A673 (cell line): ENCODE measurements at regions of chr1 and their contacts with region 1.

Region 1: GRCh38 chr1:9494929-9495758 is 44.1 kb upstream of the SLC25A33 start:
- DNase-seq: peak; percentile 75
- H3K4me3 ChIP-seq: peak overlapping the region; percentile 32
- H3K27ac ChIP-seq: no peak overlapping the region
- H3K4me1 ChIP-seq: no peaks in the 10 kb centered on the region
- H3K27me3 ChIP-seq: peaks cover 3% of the 10 kb centered on the region
- CTCF ChIP-seq: peak; percentile 94

Region 2: DNA sequence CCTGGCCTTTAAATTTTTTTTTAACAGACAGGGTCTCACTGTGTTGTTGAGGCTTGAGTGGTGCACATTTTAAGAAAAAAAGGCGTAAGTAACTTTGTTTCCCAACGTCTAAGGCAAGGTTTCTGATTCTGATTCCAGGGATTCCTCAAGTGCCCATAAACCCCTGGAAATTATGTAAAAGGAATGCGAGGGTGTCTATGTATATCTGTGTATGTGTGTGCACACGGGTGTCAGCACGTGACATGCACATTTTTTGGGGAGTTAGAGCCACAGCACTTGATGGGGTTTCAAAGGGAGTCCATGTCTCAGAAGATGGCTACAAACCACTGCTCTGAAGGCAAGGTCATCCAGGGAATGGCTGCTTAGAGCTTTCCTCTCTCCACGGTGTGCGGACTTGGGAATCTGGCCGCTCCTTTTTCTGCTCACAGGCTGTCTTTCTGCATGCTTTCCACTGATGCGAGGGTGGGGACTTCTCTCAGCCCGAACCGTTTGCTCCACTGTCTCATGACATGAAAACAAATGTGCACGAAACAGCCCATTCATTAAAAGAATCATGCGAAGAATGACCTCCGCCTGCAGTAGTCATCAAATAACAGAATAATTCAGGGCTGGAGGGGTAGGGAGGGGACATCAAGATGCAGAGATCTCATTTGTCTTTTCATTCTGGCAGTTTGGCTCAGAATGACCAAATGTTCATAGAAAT is 659.1 kb before region 1 on chr1:
- CTCF ChIA-PET with region 1: interaction called, 12 read pairs
- POLR2A ChIA-PET with region 1: no interaction called
- intact Hi-C with region 1: no loop called
- DNase-seq: no peak
- H3K4me3 ChIP-seq: no peak overlapping the region
- H3K27ac ChIP-seq: no peak overlapping the region
- H3K4me1 ChIP-seq: peaks cover 3% of the 10 kb centered on the region
- H3K27me3 ChIP-seq: no peaks in the 10 kb centered on the region
- CTCF ChIP-seq: no peak

Region 3: DNA sequence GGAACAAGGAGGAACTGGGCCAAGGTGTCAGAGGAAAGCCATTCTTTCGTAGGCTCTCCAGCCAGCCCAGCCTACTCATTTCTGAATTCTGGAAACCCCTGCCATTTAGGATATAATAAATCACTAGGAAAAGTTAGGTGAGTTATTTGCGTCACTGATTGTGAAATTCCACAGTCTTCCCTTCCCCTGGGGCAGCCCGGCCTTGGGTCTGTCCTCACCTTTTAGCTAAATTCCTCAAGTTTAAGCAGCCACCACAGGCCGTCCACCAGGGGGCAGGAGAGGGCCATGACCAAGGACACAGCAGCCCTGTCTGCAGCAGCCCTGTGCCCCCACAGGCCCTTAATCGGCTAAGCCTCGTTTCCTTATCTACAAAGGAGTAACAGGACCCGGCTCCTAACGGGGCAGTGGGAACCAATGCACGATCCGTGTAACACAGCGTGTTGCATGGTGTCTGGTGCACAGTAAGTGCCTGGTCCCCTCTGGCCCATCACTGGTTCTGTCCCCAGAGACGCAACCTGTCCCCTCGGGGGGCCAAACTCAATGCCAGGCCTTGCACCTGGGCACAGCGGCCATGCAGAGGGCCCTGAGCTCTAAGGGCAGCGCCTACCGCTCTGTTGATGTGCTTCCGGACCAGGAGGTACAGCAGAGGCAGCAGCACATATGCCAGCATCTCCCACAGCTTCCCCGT is 384.3 kb before region 1 on chr1:
- CTCF ChIA-PET with region 1: interaction called, 3 read pairs
- POLR2A ChIA-PET with region 1: no interaction called
- intact Hi-C with region 1: loop called (anchors 5 kb)
- DNase-seq: peak; percentile 87
- H3K4me3 ChIP-seq: no peak overlapping the region
- H3K27ac ChIP-seq: no peak overlapping the region
- H3K4me1 ChIP-seq: no peaks in the 10 kb centered on the region
- H3K27me3 ChIP-seq: no peaks in the 10 kb centered on the region
- CTCF ChIP-seq: peak; percentile 95

Region 4: GRCh38 chr1:9269078-9269501 is 226.1 kb before region 1 on chr1:
- CTCF ChIA-PET with region 1: interaction called, 37 read pairs
- POLR2A ChIA-PET with region 1: no interaction called
- intact Hi-C with region 1: loop called (anchors 1 kb)
- DNase-seq: no peak
- H3K4me3 ChIP-seq: no peak overlapping the region
- H3K27ac ChIP-seq: no peak overlapping the region
- H3K4me1 ChIP-seq: no peaks in the 10 kb centered on the region
- H3K27me3 ChIP-seq: no peaks in the 10 kb centered on the region
- CTCF ChIP-seq: no peak

Region 5: DNA sequence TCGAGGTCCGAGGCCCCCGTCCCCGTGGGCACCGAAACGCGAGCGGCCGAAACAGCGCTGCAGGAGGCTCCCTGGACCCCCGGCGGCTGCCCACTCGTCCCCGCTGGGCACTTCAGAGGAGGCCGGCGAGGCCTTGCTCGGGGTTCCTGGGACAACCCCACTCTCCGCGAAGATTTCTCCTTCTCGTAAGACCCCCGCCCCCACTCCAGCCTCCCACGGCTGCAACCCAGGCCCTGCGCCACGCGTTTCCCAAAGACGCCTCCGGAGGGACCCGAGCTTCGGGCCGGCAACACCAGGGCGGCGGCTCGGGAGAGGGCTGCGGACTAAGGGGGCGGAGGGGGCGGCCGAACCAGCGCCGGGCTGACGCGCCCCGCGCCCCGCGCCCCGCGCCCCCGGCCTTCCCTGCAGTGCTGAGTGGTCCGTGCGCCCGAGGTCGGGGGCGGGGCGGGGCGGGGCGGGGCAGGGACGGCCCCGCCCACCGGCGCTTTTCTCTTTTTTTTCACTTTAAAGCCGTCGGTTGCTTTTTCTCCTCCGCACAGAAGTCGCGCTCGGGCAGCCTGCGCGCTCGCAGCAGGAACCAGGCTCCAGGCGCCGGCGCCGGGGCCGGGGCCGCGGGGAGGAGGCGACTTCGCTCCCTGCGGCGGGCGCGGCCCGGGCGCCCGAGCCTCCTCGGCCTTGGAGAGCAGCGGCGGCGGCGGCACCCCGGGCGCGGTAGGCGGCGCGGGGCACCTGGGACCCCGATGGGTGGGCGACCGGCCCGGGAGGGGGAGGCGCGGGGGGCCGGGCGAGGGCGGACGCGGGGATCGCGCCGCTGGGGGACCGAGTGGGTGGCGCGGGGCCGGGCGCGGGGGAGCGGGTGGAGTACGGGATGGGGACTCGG is 202.5 kb before region 1 on chr1 and contains the start of gene SPSB1:
- CTCF ChIA-PET with region 1: interaction called, 5 read pairs
- POLR2A ChIA-PET with region 1: no interaction called
- intact Hi-C with region 1: loop called (anchors 1 kb)
- DNase-seq: peak; percentile 90
- H3K4me3 ChIP-seq: peak within 1 kb of the TSS; percentile 84
- H3K27ac ChIP-seq: peak within 1 kb of the TSS; percentile 73
- H3K4me1 ChIP-seq: peaks cover 21% of the 10 kb centered on the region
- H3K27me3 ChIP-seq: no peaks in the 10 kb centered on the region
- CTCF ChIP-seq: no peak
- total RNA-seq, gene SPSB1: 7.5 and 11.8 TPM in 2 replicates

Region 6: GRCh38 chr1:9573723-9574122 is 78.6 kb after region 1 on chr1:
- CTCF ChIA-PET with region 1: interaction called, 3 read pairs
- POLR2A ChIA-PET with region 1: no interaction called
- intact Hi-C with region 1: loop called (anchors 1 kb)
- DNase-seq: peak; percentile 39
- H3K4me3 ChIP-seq: no peak overlapping the region
- H3K27ac ChIP-seq: no peak overlapping the region
- H3K4me1 ChIP-seq: no peaks in the 10 kb centered on the region
- H3K27me3 ChIP-seq: no peaks in the 10 kb centered on the region
- CTCF ChIP-seq: peak; percentile 51